ENCODE measurements at regions of chr6 and their contacts with region 1.

Region 1: GRCh38 chr6:87407901-87408720 is at the start of gene CFAP206:
- DNase-seq: peak; percentile 91
- H3K4me3 Mint-ChIP-seq: peak within 1 kb of the TSS; percentile 86
- H3K27ac Mint-ChIP-seq: peak within 1 kb of the TSS; percentile 59
- H3K4me1 Mint-ChIP-seq: peaks cover 3% of the 10 kb centered on the region
- H3K27me3 Mint-ChIP-seq: peaks cover 25% of the 10 kb centered on the region
- total RNA-seq, gene CFAP206: not detected in 2 replicates

Region 2: GRCh38 chr6:87436435-87436834 is 28.3 kb after region 1 on chr6:
- intact Hi-C with region 1: no loop called
- DNase-seq: peak; percentile 88
- H3K4me3 Mint-ChIP-seq: no peak overlapping the region
- H3K27ac Mint-ChIP-seq: no peak overlapping the region
- H3K4me1 Mint-ChIP-seq: no peaks in the 10 kb centered on the region
- H3K27me3 Mint-ChIP-seq: peaks cover 2% of the 10 kb centered on the region

Region 3: GRCh38 chr6:87472525-87473418 is 64.7 kb after region 1 on chr6 and contains the start of gene SLC35A1:
- intact Hi-C with region 1: loop called (anchors 1 kb)
- DNase-seq: peak; percentile 96
- H3K4me3 Mint-ChIP-seq: peak within 1 kb of the TSS; percentile 95
- H3K27ac Mint-ChIP-seq: peak within 1 kb of the TSS; percentile 97
- H3K4me1 Mint-ChIP-seq: peaks cover 17% of the 10 kb centered on the region
- H3K27me3 Mint-ChIP-seq: peaks cover 8% of the 10 kb centered on the region
- total RNA-seq, gene SLC35A1: 8.8 and 9.1 TPM in 2 replicates

Region 4: GRCh38 chr6:87504441-87504840 is 96.3 kb after region 1 on chr6:
- intact Hi-C with region 1: no loop called
- DNase-seq: no peak
- H3K4me3 Mint-ChIP-seq: no peak overlapping the region
- H3K27ac Mint-ChIP-seq: no peak overlapping the region
- H3K4me1 Mint-ChIP-seq: no peaks in the 10 kb centered on the region
- H3K27me3 Mint-ChIP-seq: no peaks in the 10 kb centered on the region

Region 5: GRCh38 chr6:88183471-88183870 is 775.4 kb after region 1 on chr6:
- intact Hi-C with region 1: no loop called
- DNase-seq: no peak
- H3K4me3 Mint-ChIP-seq: no peak overlapping the region
- H3K27ac Mint-ChIP-seq: no peak overlapping the region
- H3K4me1 Mint-ChIP-seq: no peaks in the 10 kb centered on the region
- H3K27me3 Mint-ChIP-seq: peaks cover 8% of the 10 kb centered on the region

Measured in activated CD4-positive, alpha-beta T cell treated with anti-CD3 and anti-CD28 coated beads, Interleukin-2, amount 10 ng/mL, durations not matched to agents 24 days and 14 days (primary cell).